ENCODE measurements at regions of chr17 and their contacts with region 1.

Region 1: GRCh38 chr17:27760069-27760885 is 40.1 kb downstream of the NOS2 start:
- H3K4me3 Mint-ChIP-seq: no peak overlapping the region
- H3K27ac Mint-ChIP-seq: no peak overlapping the region
- H3K4me1 Mint-ChIP-seq: peaks cover 2% of the 10 kb centered on the region
- H3K27me3 Mint-ChIP-seq: peaks cover 4% of the 10 kb centered on the region

Region 2: GRCh38 chr17:27609611-27610303 is 150.5 kb before region 1 on chr17:
- intact Hi-C with region 1: loop called (anchors 5 kb)
- H3K4me3 Mint-ChIP-seq: no peak overlapping the region
- H3K27ac Mint-ChIP-seq: no peak overlapping the region
- H3K4me1 Mint-ChIP-seq: no peaks in the 10 kb centered on the region
- H3K27me3 Mint-ChIP-seq: no peaks in the 10 kb centered on the region

Region 3: GRCh38 chr17:27654654-27655524 is 105.4 kb before region 1 on chr17:
- intact Hi-C with region 1: loop called (anchors 1 kb)
- H3K4me3 Mint-ChIP-seq: no peak overlapping the region
- H3K27ac Mint-ChIP-seq: no peak overlapping the region
- H3K4me1 Mint-ChIP-seq: peaks cover 4% of the 10 kb centered on the region
- H3K27me3 Mint-ChIP-seq: no peaks in the 10 kb centered on the region

Region 4: GRCh38 chr17:27733773-27734172 is 26.5 kb before region 1 on chr17:
- intact Hi-C with region 1: no loop called
- H3K4me3 Mint-ChIP-seq: no peak overlapping the region
- H3K27ac Mint-ChIP-seq: no peak overlapping the region
- H3K4me1 Mint-ChIP-seq: no peaks in the 10 kb centered on the region
- H3K27me3 Mint-ChIP-seq: peaks cover 10% of the 10 kb centered on the region

Region 5: GRCh38 chr17:27879987-27880608 is 119.8 kb after region 1 on chr17:
- intact Hi-C with region 1: loop called (anchors 1 kb)
- H3K4me3 Mint-ChIP-seq: no peak overlapping the region
- H3K27ac Mint-ChIP-seq: no peak overlapping the region
- H3K4me1 Mint-ChIP-seq: no peaks in the 10 kb centered on the region
- H3K27me3 Mint-ChIP-seq: no peaks in the 10 kb centered on the region

Region 6: DNA sequence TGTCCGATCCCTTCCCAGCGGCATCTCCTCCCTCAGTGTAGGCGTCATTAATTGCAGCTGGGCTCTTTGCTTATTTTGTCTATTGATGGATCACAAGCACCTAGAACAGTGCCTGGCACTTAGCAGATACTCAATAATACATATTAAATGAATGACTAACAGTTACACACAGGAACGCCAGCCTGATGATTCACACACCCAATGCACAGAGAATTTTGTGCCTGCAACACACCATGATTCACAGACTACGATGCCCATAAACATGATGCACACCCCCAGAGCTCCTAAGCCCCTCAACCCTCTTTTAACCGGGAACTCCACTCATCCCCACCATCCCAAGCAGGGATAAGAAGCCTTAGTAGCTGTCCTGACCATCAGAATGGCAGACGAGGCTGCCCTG is 492.2 kb after region 1 on chr17:
- intact Hi-C with region 1: loop called (anchors 5 kb)
- H3K4me3 Mint-ChIP-seq: no peak overlapping the region
- H3K27ac Mint-ChIP-seq: no peak overlapping the region
- H3K4me1 Mint-ChIP-seq: peaks cover 10% of the 10 kb centered on the region
- H3K27me3 Mint-ChIP-seq: peaks cover 61% of the 10 kb centered on the region

Measured in dendritic cell treated with granulocyte-macrophage colony-stimulating factor and Interleukin-4, amounts not matched to agents 40 ng/mL and 50 ng/mL, for 4 days (primary cell).